GM12878 (cell line): ENCODE measurements at regions of chr14 and their contacts with region 1.

Region 1: DNA sequence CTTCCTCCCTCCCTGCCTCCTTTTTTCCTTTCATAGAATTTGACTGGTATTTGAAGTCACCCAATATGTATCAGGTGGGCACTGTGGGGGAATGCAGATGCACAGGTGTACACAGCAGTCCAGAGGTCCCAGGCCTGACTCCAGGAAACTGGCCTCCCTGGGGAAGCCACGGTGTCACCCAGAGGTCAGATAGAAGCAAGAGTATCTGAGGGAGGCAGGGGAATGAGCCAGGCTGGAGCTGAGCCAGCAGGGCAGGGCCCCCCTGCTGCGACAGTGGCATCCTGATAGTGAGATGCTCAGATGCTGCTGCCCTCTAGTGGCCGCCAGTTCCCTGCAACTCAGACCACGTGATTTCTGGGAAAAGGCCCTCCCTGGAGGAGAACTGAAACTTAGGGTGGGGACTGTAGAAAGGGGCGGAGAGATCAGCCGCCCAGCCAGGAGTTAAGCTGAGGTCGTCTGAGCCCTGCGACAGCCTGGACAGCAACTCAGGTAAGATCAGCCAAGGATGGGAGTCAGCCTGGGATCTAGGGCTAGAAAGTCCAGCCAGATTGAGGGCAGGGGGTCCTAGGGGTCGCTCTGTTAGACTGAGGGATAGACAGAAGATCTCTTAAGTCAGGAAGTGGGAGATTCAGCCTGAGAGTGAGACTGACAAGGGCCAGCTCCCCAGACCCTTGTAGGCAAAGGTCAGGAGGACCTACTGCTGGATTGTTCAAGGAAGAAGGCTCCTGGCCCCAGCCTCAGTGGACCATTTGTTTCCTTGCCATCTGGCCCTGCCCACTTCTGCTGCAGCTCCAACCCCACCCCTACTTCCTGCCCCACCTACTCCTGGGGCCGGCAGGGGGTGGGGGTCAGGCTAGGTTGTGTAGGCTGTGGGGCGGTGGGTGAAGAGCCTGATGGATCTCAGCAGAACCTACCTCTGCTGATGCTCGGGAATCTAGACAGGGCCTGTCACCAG is at the start of gene IRF9:
- DNase-seq: peak; percentile 98
- ATAC-seq: peak; percentile 91
- H3K4me3 ChIP-seq: peak within 1 kb of the TSS; percentile 99
- H3K27ac ChIP-seq: peak within 1 kb of the TSS; percentile 96
- H3K4me1 ChIP-seq: peaks cover 38% of the 10 kb centered on the region
- H3K27me3 ChIP-seq: no peaks in the 10 kb centered on the region
- CTCF ChIP-seq: peak; percentile 92 to 99 (median 98); a peak in 5 of 6 replicates
- EP300 ChIP-seq: peak in 1 of 2 experiments; percentile 52; a peak in 1 of 4 replicates
- POLR2A ChIP-seq: peak; percentile 98
- RAD21 ChIP-seq: peak; percentile 65
- polyA plus RNA-seq, gene IRF9: 47.6 to 58.7 TPM

Region 2: DNA sequence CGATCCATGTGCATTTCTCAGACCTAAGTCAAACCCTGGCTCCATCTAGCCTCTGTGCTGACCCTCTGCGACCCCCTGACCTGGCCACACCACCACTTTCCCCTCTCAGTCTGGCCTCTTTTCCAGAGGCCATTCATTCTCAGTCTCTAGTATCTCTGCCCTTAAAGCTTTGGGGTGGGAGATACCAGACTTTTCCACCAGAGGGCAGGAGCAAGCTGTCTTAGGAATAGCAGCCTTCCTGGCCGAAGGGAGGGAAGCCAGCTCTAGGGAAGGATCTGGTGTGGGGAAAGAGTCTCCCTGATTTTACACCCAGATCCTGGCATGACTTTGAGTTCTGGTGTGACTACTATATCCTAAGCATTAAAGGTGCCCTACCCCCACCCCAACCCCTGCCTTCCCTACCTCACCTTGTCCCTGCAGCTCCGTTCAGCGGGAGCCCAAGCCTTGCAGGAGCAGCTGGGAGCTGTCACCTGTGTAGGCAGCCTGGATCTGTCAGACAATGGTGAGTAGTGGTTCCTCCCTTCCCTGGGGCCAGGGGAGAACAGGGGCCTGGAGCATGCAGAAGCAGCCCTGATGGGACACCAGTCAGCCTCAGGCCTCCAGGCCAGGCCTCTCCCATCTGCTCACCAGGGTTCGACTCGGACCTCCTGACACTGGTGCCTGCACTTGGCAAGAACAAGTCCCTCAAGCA is 102.7 kb before region 1 on chr14:
- CTCF ChIA-PET with region 1: interaction called, 37 read pairs
- POLR2A ChIA-PET with region 1: interaction called, 6 read pairs
- RAD21 ChIA-PET with region 1: interaction called, 37 read pairs
- SMC1A ChIA-PET with region 1: interaction called, 21 read pairs
- in situ Hi-C with region 1: no loop called
- intact Hi-C with region 1: loop called (anchors 1 kb)
- DNase-seq: no peak
- ATAC-seq: peak; percentile 86
- H3K4me3 ChIP-seq: no peak overlapping the region
- H3K27ac ChIP-seq: no peak overlapping the region
- H3K4me1 ChIP-seq: no peaks in the 10 kb centered on the region
- H3K27me3 ChIP-seq: no peaks in the 10 kb centered on the region; a peak in 1 of 4 replicates
- CTCF ChIP-seq: peak; percentile 66 to 85 (median 80)
- EP300 ChIP-seq: no peak
- POLR2A ChIP-seq: no peak
- RAD21 ChIP-seq: peak; percentile 94

Region 3: DNA sequence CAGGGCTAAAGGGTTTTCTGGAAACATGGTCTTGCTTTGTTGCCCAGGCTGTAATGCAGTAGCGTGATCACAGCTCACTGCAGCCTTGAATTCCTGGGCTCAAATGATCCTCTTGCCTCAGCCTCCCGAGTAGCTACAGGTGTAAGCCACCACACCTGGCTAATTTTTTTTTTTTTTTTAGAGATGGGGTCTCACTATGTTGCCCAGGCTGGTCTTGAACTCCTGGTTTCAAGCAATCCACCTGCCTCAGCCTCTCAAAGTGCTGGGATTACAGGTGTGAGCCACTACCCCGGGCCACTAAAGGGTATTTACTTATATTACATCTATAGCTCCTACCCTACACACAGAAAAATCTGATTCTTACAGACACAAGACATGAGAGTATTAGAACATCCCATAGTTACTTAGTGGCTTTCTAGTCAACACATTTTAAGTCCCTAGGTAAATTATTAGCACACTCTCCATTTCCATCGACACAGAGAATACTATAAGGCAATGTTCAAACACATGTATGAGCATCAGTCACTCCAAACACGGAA is 52.7 kb before region 1 on chr14:
- CTCF ChIA-PET with region 1: interaction called, 57 read pairs
- POLR2A ChIA-PET with region 1: interaction called, 76 read pairs
- RAD21 ChIA-PET with region 1: interaction called, 60 read pairs
- SMC1A ChIA-PET with region 1: interaction called, 39 read pairs
- in situ Hi-C with region 1: no loop called
- intact Hi-C with region 1: no loop called
- DNase-seq: no peak
- ATAC-seq: peak; percentile 55; the same call in 2 of the 3 replicates
- H3K4me3 ChIP-seq: no peak overlapping the region
- H3K27ac ChIP-seq: peak overlapping the region; percentile 69; the same call in 1 of the 2 replicates
- H3K4me1 ChIP-seq: peaks cover 7% of the 10 kb centered on the region
- H3K27me3 ChIP-seq: no peaks in the 10 kb centered on the region
- CTCF ChIP-seq: no peak
- EP300 ChIP-seq: no peak
- POLR2A ChIP-seq: no peak
- RAD21 ChIP-seq: no peak

Region 4: DNA sequence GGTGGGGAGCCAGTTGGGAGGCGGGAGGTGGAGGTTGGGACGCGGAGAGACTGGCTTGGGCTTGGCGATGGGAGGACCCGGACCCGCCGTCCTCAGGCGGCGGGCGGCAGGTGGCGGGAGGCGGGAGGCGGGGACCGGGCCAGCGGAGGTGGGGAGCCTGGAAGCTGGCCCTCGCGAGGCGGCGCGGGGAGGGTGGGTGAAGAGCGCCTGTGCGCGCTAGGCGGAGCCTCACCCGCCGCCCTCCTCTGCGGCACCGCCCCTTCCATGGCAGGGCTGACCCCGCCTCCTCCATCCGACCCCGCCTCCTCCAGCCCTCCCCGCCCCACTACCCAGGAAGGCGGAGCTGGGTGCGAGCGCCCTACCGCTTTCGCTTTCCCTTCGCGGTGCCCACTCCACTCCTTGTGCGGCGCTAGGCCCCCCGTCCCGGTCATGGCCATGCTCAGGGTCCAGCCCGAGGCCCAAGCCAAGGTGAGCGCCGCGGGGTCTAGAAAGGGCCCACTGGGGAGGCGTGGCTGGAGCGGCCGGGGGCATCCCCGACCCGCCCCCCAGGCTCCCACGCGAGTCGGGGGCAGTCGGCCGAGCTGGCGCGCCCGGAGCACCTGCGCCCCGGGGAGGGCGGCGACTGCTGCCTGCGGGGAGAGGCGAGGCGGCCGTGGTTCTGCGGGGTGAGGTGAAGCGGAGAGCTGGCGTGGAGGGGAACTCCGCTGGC is 25.1 kb before region 1 on chr14 and contains the start of gene PSME1:
- CTCF ChIA-PET with region 1: interaction called, 34 read pairs
- POLR2A ChIA-PET with region 1: interaction called, 77 read pairs
- RAD21 ChIA-PET with region 1: interaction called, 21 read pairs
- SMC1A ChIA-PET with region 1: interaction called, 21 read pairs
- in situ Hi-C with region 1: no loop called
- intact Hi-C with region 1: no loop called
- DNase-seq: peak; percentile 75
- ATAC-seq: peak; percentile 94
- H3K4me3 ChIP-seq: peak within 1 kb of the TSS; percentile 99
- H3K27ac ChIP-seq: peak within 1 kb of the TSS; percentile 95
- H3K4me1 ChIP-seq: peaks cover 40% of the 10 kb centered on the region
- H3K27me3 ChIP-seq: no peaks in the 10 kb centered on the region
- CTCF ChIP-seq: no peak
- EP300 ChIP-seq: no peak
- POLR2A ChIP-seq: peak; percentile 86
- RAD21 ChIP-seq: no peak
- polyA plus RNA-seq, gene PSME1: 1,299 to 1,378 TPM

Region 5: GRCh38 chr14:24171422-24172260 is 10.5 kb after region 1 on chr14 and contains the start of gene REC8:
- CTCF ChIA-PET with region 1: interaction called, 18 read pairs
- POLR2A ChIA-PET with region 1: interaction called, 11 read pairs
- RAD21 ChIA-PET with region 1: interaction called, 5 read pairs
- SMC1A ChIA-PET with region 1: interaction called, 9 read pairs
- in situ Hi-C with region 1: no loop called
- intact Hi-C with region 1: no loop called
- DNase-seq: peak; percentile 82
- ATAC-seq: peak; percentile 90
- H3K4me3 ChIP-seq: peak within 1 kb of the TSS; percentile 62
- H3K27ac ChIP-seq: peak within 1 kb of the TSS; percentile 68
- H3K4me1 ChIP-seq: no peaks in the 10 kb centered on the region
- H3K27me3 ChIP-seq: no peaks in the 10 kb centered on the region
- CTCF ChIP-seq: no peak
- EP300 ChIP-seq: no peak
- POLR2A ChIP-seq: peak; percentile 76
- RAD21 ChIP-seq: no peak
- polyA plus RNA-seq, gene REC8: 4.2 to 9.6 TPM

Region 6: DNA sequence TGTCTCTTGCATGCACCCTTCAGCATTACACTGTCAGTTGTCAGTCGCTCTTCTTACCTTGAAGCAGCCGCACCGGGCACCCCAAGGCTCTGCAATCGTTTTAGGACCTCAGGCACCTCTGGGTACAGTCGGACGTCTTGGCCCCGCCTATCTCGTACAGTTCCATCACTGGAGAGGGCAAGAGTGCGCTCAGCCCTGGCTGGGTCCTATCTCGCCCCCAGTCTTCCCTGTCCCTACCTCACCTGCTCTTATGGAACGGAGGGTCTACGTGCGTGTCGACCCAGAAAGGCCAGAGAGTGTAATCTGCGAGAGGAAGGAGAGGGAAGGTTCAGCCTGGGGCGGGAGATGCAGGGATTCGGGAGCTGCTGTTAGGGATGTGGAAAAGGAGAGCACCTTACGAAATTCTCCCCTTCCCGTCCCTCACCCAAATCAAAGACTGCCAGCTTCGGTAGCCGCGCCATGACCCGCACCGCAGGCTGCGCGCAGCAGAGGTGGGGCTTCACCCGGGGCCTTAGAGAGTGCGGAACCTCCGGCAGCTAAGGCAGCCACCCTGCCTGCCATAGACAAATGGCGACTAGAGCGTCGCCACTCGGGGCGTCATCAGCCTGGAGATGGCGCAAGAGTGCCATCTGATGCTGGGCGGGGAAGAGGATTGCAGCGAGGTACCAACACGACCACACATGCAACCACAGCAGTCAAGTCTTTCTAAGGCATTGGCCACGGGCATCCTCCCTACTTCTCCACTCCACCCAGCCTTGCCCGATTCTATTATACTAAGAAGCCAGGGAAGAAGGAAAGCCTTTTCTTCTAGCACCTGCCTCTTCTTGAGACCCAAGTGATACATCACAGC is 54.6 kb after region 1 on chr14 and contains the start of gene MDP1:
- CTCF ChIA-PET with region 1: interaction called, 21 read pairs
- POLR2A ChIA-PET with region 1: interaction called, 14 read pairs
- RAD21 ChIA-PET with region 1: interaction called, 7 read pairs
- SMC1A ChIA-PET with region 1: interaction called, 6 read pairs
- in situ Hi-C with region 1: no loop called
- intact Hi-C with region 1: loop called (anchors 1 kb)
- DNase-seq: peak; percentile 79
- ATAC-seq: peak; percentile 83
- H3K4me3 ChIP-seq: peak within 1 kb of the TSS; percentile 86
- H3K27ac ChIP-seq: peak within 1 kb of the TSS; percentile 82
- H3K4me1 ChIP-seq: peaks cover 15% of the 10 kb centered on the region
- H3K27me3 ChIP-seq: no peaks in the 10 kb centered on the region
- CTCF ChIP-seq: peak; percentile 82 to 94 (median 83); a peak in 5 of 6 replicates
- EP300 ChIP-seq: 0 out of 4 replicates have a peak, but pooled peaks have one; percentile 8 to 31
- POLR2A ChIP-seq: peak; percentile 93
- RAD21 ChIP-seq: peak; percentile 76
- polyA plus RNA-seq, gene MDP1: 39.2 to 45.8 TPM

Region 7: DNA sequence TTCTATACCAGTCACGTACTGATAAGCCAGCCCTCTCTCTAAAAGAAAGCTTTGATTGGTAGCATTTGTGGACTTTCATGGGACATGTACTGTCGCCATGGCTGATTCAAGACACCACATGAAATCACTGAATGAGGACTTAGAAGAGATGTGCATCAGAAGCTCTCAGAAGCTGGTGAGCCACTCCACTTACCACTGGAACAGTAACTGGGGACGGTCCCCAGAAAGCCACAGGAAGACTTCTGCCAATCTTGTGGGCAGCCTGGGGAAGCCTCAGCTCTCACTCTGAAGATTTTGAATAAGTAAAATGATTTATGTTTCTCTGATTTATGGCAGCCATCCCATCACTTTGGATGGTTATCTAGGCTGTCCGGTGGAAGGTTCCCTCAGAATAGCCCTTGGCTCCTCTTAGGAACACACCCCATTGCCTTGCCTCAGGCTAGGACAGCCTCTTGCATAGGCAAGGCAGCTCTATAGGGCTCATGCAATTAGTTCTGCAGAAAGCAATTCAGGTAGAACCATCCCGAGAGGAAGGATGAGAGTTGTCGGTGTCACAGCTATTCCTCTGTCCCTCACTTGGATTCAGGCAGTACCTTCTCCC is 128.6 kb after region 1 on chr14:
- CTCF ChIA-PET with region 1: no interaction called
- POLR2A ChIA-PET with region 1: no interaction called
- RAD21 ChIA-PET with region 1: no interaction called
- SMC1A ChIA-PET with region 1: no interaction called
- in situ Hi-C with region 1: no loop called
- intact Hi-C with region 1: no loop called
- DNase-seq: no peak
- ATAC-seq: peak; percentile 95
- H3K4me3 ChIP-seq: no peak overlapping the region
- H3K27ac ChIP-seq: 0 out of 2 replicates have a peak overlapping the region, but pooled peaks have one; percentile 24
- H3K4me1 ChIP-seq: peaks cover 11% of the 10 kb centered on the region
- H3K27me3 ChIP-seq: no peaks in the 10 kb centered on the region
- CTCF ChIP-seq: no peak
- EP300 ChIP-seq: no peak
- POLR2A ChIP-seq: no peak
- RAD21 ChIP-seq: no peak

Region 8: DNA sequence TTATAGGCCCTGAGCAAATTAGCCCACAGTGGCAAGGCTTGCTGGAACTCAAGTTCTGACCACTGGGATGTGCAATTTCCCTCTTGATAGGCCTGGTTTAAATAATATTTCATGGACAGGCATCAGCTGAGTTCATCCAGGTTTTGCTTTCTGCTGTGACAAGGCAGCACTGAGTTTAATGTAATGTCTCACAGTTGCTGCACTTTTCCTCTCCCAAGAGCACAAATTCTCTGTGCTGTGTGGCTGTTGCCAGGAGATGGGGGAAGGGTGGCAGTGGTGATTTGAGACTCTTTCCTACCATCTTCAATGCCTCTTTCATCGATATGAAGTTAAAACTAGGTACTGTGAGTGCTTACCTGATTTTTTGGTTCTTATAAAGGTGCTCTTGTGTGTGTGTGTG is 1161.7 kb after region 1 on chr14:
- CTCF ChIA-PET with region 1: no interaction called
- POLR2A ChIA-PET with region 1: no interaction called
- RAD21 ChIA-PET with region 1: no interaction called
- SMC1A ChIA-PET with region 1: no interaction called
- in situ Hi-C with region 1: no loop called
- intact Hi-C with region 1: no loop called
- DNase-seq: no peak
- ATAC-seq: no peak
- H3K4me3 ChIP-seq: no peak overlapping the region
- H3K27ac ChIP-seq: no peak overlapping the region
- H3K4me1 ChIP-seq: no peaks in the 10 kb centered on the region
- H3K27me3 ChIP-seq: no peaks in the 10 kb centered on the region
- CTCF ChIP-seq: no peak
- EP300 ChIP-seq: no peak
- POLR2A ChIP-seq: no peak
- RAD21 ChIP-seq: no peak